Adrenal gland (tissue), 19 donors: ENCODE measurements at regions of chr12 and their contacts with region 1.

Region 1: DNA sequence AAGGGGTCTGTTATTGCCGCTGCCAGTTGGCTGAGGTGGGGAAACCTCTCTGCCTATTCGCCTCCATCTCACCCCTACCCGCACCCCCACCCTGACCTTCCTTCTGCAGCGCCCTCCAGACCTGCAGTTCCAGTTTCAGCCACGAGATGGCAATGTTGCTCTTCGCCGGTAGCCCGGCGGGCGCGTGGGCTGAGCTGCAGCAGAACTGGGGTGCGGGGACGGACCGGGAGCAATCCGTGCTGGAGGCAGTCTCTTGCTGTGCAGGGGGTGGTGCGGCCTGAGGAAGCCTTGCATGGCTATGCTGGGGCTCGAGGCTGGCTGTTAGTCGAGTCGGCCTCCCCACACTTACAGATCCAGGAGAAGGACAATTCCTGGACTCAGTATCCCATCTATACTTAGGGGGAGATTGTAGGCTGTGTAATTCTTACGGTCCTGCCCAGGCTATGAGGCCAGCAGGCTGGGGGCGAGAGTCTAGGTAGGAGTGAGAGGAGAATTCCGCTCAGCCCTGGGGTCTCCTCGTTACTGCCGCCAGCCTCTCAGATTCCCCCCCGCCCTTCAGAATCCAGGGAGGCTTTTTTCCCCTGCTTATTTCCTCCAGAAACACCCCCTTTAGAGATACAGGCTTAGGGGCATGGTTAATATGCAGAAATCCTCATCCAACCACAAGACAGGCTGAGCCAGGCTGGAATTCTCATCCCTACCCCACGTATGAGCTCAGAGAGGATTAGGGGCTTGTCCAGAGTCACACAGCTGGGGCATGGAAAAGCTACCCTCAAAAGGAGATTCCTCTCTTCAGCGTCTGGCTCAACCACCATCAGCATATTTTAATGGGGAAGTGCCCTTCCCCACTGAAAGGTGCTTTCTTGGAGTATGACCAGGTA is 118.2 kb downstream of the AACS start:
- DNase-seq: peak; percentile 58 to 80 (median 77)
- H3K4me3 ChIP-seq: no peak overlapping the region
- H3K27ac ChIP-seq: no peak overlapping the region
- H3K4me1 ChIP-seq: peaks cover 0 to 8% of the 10 kb centered on the region in 2 donors
- H3K27me3 ChIP-seq: peaks cover 26% of the 10 kb centered on the region
- CTCF ChIP-seq: peak; percentile 94 to 100 (median 98)
- POLR2A ChIP-seq: no peak

Region 2: GRCh38 chr12:125402874-125403789 is 219.7 kb after region 1 on chr12:
- intact Hi-C with region 1: loop called (anchors 5 kb)
- DNase-seq: peak in 2 of 7 donors; percentile 2 to 26
- H3K4me3 ChIP-seq: no peak overlapping the region
- H3K27ac ChIP-seq: no peak overlapping the region
- H3K4me1 ChIP-seq: no peaks in the 10 kb centered on the region
- H3K27me3 ChIP-seq: peaks cover 4% of the 10 kb centered on the region
- CTCF ChIP-seq: peak; percentile 34 to 61 (median 46)
- POLR2A ChIP-seq: no peak

Region 3: GRCh38 chr12:126198966-126199692 is 1015.7 kb after region 1 on chr12:
- intact Hi-C with region 1: no loop called
- DNase-seq: peak in 3 of 7 donors; percentile 10 to 60 (median 25)
- H3K4me3 ChIP-seq: no peak overlapping the region
- H3K27ac ChIP-seq: no peak overlapping the region
- H3K4me1 ChIP-seq: no peaks in the 10 kb centered on the region
- H3K27me3 ChIP-seq: no peaks in the 10 kb centered on the region
- CTCF ChIP-seq: no peak
- POLR2A ChIP-seq: no peak

Region 4: GRCh38 chr12:126747530-126748149 is 1564.2 kb after region 1 on chr12:
- intact Hi-C with region 1: loop called in 1 of 2 experiments (anchors 10 kb)
- DNase-seq: peak; percentile 31 to 64 (median 44)
- H3K4me3 ChIP-seq: no peak overlapping the region
- H3K27ac ChIP-seq: no peak overlapping the region
- H3K4me1 ChIP-seq: no peaks in the 10 kb centered on the region
- H3K27me3 ChIP-seq: no peaks in the 10 kb centered on the region
- CTCF ChIP-seq: peak; percentile 58 to 88 (median 68)
- POLR2A ChIP-seq: no peak

Region 5: GRCh38 chr12:126874427-126875026 is 1691.1 kb after region 1 on chr12:
- intact Hi-C with region 1: loop called in 1 of 2 experiments (anchors 5 kb)
- DNase-seq: peak; percentile 39 to 72 (median 55)
- H3K4me3 ChIP-seq: no peak overlapping the region
- H3K27ac ChIP-seq: no peak overlapping the region
- H3K4me1 ChIP-seq: no peaks in the 10 kb centered on the region
- H3K27me3 ChIP-seq: no peaks in the 10 kb centered on the region
- CTCF ChIP-seq: peak; percentile 52 to 83 (median 73)
- POLR2A ChIP-seq: no peak